Activated T-helper 1 cell treated with anti-CD3 and anti-CD28 coated beads, Interleukin-12 subunit alpha, Interleukin-12 subunit beta, Interleukin-2, Interleukin-4 antibody, amounts not matched to agents 30 ng/mL and 10 ng/mL and 1 ng/mL, durations not matched to agents 14 hours and 24 hours and 36 hours (primary cell): ENCODE measurements at regions of chr6 and their contacts with region 1.

Region 1: DNA sequence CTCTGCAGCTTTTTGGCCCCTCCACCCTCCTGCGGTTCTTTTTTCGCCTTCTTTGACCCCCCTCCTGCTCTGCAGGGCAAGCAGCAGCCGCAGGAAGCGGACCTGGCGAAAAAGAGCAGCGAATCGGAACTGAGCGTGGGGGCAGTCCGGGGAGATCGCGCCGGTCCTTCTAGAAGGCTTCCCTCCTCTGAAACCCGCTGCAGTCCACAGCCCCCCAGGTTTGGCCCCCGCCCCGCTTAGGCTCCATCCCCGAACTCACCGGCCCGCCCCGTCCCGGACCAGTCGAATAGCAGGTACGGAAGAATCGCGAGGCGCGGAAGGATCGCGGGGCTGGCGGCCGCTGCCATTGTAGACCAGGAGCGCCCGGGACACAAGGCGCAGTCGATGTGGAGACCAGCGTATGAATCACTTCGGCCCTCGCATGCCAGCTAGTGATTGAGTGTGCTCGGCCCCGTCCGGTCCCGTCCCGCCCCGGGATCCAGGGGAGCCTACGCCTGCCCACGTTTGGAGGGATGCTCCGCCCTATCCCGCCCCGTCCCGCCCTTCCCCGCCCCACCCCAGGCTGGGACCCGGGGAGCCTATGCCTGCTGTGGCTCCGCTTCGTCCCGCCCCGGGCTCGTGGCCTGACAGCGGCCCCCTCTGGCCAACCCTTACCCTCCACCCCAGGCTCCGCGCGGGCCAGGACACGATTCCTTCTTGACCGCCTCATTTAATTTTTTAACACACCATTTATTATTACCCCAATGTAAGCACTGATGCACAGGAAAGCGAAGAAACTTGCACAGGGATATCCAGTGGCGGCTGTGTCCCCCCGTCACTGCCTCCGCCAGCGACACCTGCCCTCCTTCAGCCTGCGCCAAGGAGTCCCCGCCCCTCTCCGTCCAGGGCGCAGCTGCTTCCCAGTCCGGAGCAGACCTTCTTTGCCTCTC is at the start of gene ULBP3:
- DNase-seq: peak; percentile 55
- H3K4me3 Mint-ChIP-seq: peak within 1 kb of the TSS; percentile 83
- H3K27ac Mint-ChIP-seq: no peak within 1 kb of the TSS
- H3K4me1 Mint-ChIP-seq: peaks cover 16% of the 10 kb centered on the region
- H3K27me3 Mint-ChIP-seq: peaks cover 22% of the 10 kb centered on the region
- total RNA-seq, gene ULBP3: 0.56 TPM in 1 of 2 replicates, not detected in the other

Region 2: DNA sequence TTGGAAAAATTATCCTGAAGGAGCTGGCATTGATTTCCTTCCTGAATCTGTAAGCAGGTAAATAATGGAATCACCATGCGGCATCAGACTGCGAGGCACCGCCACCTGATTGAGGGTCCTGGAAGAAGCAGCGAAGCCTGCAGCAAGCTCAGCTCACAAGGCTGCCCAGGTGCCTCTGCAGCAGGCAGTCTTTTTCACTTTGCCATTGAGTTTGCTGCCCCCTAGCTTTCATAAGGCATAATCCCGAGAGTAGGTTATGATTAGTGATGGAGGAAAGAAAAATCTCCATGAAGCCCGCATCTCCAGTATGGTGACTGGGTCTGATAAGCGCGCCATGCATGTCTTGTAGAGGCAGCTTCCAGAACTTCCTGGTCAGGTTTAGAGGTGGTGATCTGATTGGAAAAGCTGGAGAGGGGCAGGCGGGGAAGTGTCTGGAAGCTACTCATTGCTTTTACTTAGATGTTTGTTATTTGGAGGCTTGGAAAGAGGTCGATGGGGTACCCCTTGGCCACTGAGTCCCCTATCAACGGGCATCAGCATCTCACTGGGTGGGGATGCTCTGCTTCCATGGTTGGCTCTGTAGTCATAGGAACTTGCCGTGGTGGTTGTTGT is 326.5 kb after region 1 on chr6:
- intact Hi-C with region 1: loop called (anchors 1 kb)
- DNase-seq: peak; percentile 12
- H3K4me3 Mint-ChIP-seq: no peak overlapping the region
- H3K27ac Mint-ChIP-seq: no peak overlapping the region
- H3K4me1 Mint-ChIP-seq: no peaks in the 10 kb centered on the region
- H3K27me3 Mint-ChIP-seq: peaks cover 4% of the 10 kb centered on the region